Mammary epithelial cell (primary cell): ENCODE measurements at regions of chr1 and their contacts with region 1.

Region 1: GRCh38 chr1:160951443-160952128 is 3.0 kb downstream of the ITLN2 start:
- DNase-seq: peak; percentile 69
- H3K4me3 ChIP-seq: no peak overlapping the region
- H3K27ac ChIP-seq: peak overlapping the region; percentile 70
- H3K4me1 ChIP-seq: peaks cover 38% of the 10 kb centered on the region
- H3K27me3 ChIP-seq: no peaks in the 10 kb centered on the region
- CTCF ChIP-seq: peak; percentile 84 to 86

Region 2: DNA sequence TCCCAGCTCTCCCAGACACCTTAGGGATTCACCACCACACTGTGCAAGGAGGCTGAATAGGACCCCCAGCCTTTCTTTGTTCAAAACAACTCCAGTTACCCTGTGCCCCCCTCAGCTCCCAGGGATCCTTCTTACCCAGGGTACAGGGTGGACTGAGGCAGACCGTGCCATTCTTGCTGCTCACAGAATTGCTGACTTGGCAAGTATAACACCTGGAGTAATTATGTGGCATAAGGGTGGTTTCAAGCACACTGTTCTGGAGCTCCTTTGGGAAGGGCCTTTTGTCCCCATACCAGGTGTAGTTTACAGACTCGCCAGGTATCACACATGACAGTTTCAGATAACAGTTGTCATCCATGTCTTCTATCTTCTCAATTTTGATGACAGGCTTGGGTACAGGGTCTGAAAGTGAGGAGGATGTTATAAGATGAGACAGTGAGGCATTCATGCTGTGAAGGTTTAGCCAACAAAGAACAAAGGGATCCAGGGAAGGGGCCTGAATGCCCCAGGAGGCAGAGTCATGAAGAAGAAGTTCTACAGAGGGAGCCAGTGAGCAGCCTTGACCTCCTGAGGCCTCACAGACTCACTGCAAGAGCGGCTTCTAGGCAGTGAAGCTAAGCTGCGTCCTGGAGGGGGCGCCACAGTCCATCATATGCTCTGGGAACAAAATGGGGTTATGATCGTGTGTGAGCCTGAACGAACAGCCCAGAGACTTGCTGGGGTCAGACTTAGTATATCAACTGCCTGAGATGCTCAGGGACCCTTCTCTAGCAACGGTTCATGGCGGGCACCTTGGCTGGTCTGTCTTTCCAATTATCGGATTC is 270.3 kb before region 1 on chr1:
- CTCF ChIA-PET with region 1: no interaction called
- dilution Hi-C with region 1: no loop called
- in situ Hi-C with region 1: no loop called
- intact Hi-C with region 1: loop called (anchors 2 kb)
- DNase-seq: peak; percentile 61
- H3K4me3 ChIP-seq: no peak overlapping the region
- H3K27ac ChIP-seq: no peak overlapping the region
- H3K4me1 ChIP-seq: no peaks in the 10 kb centered on the region
- H3K27me3 ChIP-seq: no peaks in the 10 kb centered on the region
- CTCF ChIP-seq: peak; percentile 79 to 91

Region 3: GRCh38 chr1:160777486-160778089 is 174.0 kb before region 1 on chr1:
- CTCF ChIA-PET with region 1: interaction called, 3 read pairs
- dilution Hi-C with region 1: no loop called
- in situ Hi-C with region 1: no loop called
- intact Hi-C with region 1: loop called (anchors 2 kb)
- DNase-seq: peak; percentile 31
- H3K4me3 ChIP-seq: no peak overlapping the region
- H3K27ac ChIP-seq: no peak overlapping the region
- H3K4me1 ChIP-seq: peaks cover 4% of the 10 kb centered on the region
- H3K27me3 ChIP-seq: no peaks in the 10 kb centered on the region
- CTCF ChIP-seq: peak; percentile 64 to 73

Region 4: GRCh38 chr1:160868141-160868540 is 83.4 kb before region 1 on chr1:
- CTCF ChIA-PET with region 1: no interaction called
- dilution Hi-C with region 1: loop called (anchors 5 kb)
- in situ Hi-C with region 1: no loop called
- intact Hi-C with region 1: no loop called
- DNase-seq: peak; percentile 6
- H3K4me3 ChIP-seq: no peak overlapping the region
- H3K27ac ChIP-seq: no peak overlapping the region
- H3K4me1 ChIP-seq: no peaks in the 10 kb centered on the region
- H3K27me3 ChIP-seq: no peaks in the 10 kb centered on the region
- CTCF ChIP-seq: no peak

Region 5: DNA sequence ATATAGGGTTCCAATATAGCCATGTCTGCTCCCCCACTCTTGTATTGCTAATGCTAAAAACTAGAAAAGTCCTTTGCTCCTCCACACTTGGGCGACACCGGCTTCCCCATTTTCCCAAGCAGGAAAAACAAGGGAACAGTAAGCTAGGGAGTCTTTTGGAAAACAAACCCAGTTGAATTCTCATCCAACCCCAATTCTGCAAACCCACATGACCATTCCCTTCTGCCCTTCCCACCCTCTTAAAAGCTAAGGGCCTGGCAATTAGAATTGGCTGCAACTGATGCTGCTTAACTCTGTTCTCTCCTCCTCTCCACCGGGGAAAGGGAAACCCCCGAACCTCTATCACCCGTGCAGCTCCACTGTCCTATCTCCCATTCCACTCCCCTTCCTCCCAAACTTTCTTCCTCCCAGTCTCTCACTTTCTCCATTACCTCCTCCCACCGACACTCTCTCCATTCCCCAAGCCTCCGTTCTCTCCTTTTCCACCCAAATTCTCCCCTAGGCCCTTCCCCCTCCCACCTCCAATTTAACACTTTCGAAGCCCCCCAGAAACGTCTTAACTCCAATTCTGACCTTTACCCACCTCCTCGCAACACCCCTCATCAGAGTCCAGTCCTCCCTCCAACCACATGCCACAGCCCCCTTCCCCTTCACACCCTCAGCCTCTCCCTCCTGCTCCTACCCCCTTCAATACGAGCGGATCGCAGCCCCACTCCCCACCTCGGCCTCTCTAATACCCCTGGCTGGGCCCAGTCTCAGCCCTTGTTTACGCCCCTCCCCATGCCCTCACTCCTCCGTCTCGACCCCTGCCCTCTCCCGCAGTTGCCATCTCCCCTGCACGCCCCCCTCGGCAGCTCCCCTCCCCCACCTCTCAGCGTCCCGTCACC is 180.2 kb after region 1 on chr1:
- CTCF ChIA-PET with region 1: no interaction called
- dilution Hi-C with region 1: no loop called
- in situ Hi-C with region 1: no loop called
- intact Hi-C with region 1: no loop called
- DNase-seq: peak; percentile 30
- H3K4me3 ChIP-seq: peak overlapping the region; percentile 57 to 88 (median 65)
- H3K27ac ChIP-seq: peak overlapping the region; percentile 91
- H3K4me1 ChIP-seq: peaks cover 10% of the 10 kb centered on the region
- H3K27me3 ChIP-seq: no peaks in the 10 kb centered on the region
- CTCF ChIP-seq: no peak

Region 6: DNA sequence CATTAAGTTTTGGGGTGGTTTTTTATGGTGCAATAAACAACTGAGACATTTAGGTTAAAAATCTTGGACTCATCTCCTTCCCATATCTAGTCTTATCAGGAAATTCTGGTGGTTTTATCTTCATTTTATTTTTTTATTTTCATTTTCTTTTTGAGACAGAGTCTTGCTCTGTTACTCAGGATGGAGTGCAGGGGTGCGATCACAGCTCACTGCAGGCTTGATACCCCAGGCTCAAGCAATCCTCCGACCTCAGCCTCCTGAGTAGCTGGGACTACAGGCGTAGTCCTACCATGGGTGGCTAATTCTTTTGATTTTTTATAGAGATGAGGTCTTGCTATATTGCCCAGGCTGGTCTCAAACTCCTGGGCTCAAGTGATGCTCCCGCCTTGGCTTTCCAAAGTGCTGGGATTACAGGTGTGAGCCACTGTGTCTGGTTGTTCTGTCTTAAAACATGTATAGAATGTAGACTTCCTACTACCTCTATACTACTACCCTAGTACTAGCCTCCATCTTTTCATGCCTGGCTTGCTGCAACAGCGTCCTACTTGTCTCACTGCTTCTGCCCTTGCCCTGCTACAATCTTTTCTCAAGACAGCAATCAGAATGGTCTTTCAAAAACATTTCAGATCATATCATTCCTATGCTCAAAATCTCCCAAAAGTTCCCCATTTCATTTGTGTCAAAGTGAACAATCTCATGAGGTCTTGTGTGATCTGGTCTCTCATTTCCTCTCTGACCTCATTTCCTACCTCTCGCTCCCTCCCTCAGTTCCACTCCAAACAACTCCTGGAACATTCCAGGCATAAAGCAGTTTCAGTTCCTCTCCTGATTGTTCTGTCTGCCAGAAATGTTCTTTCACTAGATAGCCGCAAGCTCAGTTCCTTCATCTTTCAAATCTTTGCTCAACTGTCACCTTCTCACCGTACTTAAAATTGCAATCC is 547.8 kb after region 1 on chr1:
- CTCF ChIA-PET with region 1: no interaction called
- dilution Hi-C with region 1: no loop called
- in situ Hi-C with region 1: no loop called
- intact Hi-C with region 1: no loop called
- DNase-seq: no peak
- H3K4me3 ChIP-seq: no peak overlapping the region
- H3K27ac ChIP-seq: no peak overlapping the region
- H3K4me1 ChIP-seq: no peaks in the 10 kb centered on the region
- H3K27me3 ChIP-seq: no peaks in the 10 kb centered on the region
- CTCF ChIP-seq: no peak